Prostate gland (tissue), 2 donors: ENCODE measurements at regions of chr7 and their contacts with region 1.

Region 1: DNA sequence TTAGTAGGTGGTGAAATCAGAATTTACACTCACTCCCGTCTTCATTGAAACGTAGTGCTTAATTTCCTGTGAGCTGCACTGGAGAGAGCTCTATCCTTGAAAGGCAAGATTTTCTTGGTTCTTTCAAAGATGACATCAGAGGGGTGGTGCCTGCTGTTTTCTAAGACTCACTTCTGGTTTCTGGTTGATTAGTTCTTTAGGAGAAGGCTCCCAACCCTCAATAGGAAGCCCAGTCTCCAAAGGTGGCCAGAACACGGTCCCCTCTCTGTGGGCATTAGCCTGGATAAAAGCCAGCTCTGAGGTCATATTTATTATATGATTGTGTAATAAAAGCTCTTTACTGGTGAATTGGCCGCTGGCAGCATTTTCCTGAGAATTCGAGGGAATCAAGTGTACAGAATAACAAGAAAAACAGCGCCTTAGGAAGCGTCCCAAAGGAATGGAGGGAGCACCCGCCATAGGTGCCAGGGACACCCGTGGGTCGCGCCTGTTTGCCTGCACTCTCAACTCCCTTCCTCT is 23.8 kb upstream of the GALNTL5 start:
- DNase-seq: peak; percentile 28
- H3K4me3 ChIP-seq: no peak overlapping the region
- H3K27ac ChIP-seq: peak overlapping the region; percentile 60 to 78
- H3K4me1 ChIP-seq: no peaks in the 10 kb centered on the region
- H3K27me3 ChIP-seq: no peaks in the 10 kb centered on the region
- CTCF ChIP-seq: no peak
- POLR2A ChIP-seq: peak; percentile 46

Region 2: DNA sequence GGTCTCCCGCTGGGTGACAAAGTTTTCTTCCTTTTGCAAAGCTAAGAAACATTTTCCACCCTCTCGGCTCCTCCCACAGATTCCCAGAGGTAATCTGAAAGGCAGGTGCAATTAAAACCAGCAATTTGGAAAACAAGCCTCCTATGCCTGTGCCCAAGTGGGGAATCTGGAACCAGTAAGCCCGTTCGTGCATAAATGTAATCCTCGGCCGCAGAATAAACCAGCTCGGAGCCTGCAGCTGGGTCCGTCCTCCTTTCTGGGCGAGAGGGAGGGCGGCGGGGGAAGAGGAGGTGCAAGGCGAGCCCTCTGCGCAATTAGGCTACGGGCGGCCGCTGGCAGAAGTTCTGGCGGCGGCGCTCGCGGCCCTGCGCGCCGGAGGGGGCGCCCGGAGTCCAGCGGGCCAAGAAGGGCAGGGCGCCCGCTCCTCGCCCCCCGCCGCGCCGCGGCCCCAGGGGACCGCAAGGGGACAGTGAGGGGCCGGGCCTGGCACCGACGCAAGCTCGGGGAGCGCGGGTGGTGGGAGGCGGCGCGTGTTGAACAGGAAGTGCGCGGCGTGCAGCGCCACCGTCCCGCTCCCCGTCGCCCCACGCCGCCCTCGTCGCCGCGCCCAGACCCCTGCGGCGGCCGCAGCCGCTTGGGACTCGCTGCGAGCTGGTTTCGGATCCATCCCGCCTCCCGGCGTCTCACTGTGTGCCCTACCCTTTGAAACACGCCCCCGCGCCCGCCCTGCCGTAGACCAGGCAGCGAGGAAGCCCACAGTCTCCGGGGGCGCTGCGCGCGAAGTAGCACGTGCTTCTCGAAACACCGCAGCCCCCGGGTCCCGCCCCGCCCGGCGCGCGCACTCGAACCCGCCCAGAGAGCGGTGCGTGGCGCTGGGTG is 55.3 kb before region 1 on chr7 and contains the start of gene PRKAG2:
- intact Hi-C with region 1: loop called (anchors 5 kb)
- DNase-seq: peak; percentile 73
- H3K4me3 ChIP-seq: peak within 1 kb of the TSS; percentile 93 to 97
- H3K27ac ChIP-seq: peak within 1 kb of the TSS; percentile 99
- H3K4me1 ChIP-seq: peaks cover 10% of the 10 kb centered on the region
- H3K27me3 ChIP-seq: no peaks in the 10 kb centered on the region
- CTCF ChIP-seq: peak in 2 of 4 experiments; percentile 2 to 43
- POLR2A ChIP-seq: peak; percentile 39
- total RNA-seq, gene PRKAG2: 31.6 to 38.1 TPM